GM12878 (cell line): ENCODE measurements at regions of chr10 and their contacts with region 1.

Region 1: GRCh38 chr10:54826994-54827560 is 26.0 kb upstream of the PCDH15 start:
- DNase-seq: no peak
- ATAC-seq: no peak
- H3K4me3 ChIP-seq: no peak overlapping the region
- H3K27ac ChIP-seq: no peak overlapping the region
- H3K4me1 ChIP-seq: no peaks in the 10 kb centered on the region
- H3K27me3 ChIP-seq: no peaks in the 10 kb centered on the region
- CTCF ChIP-seq: no peak
- EP300 ChIP-seq: no peak
- POLR2A ChIP-seq: no peak
- RAD21 ChIP-seq: no peak

Region 2: DNA sequence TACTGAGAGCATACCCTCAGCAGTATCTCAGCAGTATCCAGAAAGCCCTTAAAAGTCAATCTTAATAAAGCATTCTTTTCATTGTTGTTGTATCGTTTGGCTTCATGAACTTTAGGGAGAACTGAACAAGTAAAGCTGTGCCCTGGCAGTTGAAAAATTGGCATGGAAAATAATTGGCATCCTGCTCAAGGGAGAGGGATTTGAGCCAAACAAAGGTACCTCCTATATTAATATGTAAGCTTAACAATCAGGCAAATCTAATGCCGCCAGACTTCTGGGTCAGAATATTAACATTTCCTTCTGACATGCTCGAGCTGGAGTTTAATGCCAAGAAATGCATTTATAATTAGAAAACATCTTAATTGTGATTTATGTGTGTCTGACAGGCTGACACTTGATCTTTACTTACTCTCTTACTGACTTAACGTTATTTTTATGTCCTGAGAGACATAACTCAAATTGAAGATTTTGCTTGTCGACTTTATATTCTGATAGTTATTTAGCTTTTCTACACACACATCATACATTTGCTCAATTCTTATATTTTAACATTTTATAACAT is 16.1 kb after region 1 on chr10:
- CTCF ChIA-PET with region 1: no interaction called
- POLR2A ChIA-PET with region 1: no interaction called
- RAD21 ChIA-PET with region 1: no interaction called
- SMC1A ChIA-PET with region 1: no interaction called
- in situ Hi-C with region 1: no loop called
- intact Hi-C with region 1: no loop called
- DNase-seq: no peak
- ATAC-seq: no peak
- H3K4me3 ChIP-seq: no peak overlapping the region
- H3K27ac ChIP-seq: no peak overlapping the region
- H3K4me1 ChIP-seq: no peaks in the 10 kb centered on the region
- H3K27me3 ChIP-seq: no peaks in the 10 kb centered on the region
- CTCF ChIP-seq: no peak
- EP300 ChIP-seq: no peak
- POLR2A ChIP-seq: no peak
- RAD21 ChIP-seq: no peak

Region 3: DNA sequence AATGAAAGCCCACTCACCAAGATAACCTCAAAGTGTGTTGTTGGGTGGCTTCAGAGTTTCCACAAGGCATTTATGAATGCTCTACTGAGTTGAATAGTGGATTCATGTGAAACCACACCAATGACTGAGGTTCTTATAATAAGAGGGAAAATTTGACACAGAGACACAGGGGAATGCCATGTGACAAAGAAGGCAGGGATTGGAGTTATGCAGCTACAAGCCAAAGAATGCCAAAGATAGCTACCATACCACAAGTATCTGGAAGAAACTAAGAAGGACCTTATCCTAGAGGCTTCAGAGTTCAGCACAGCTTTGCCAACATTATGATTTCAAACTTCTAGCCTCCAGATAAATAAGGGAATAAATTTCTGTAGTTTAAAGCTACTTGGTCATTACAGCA is 41.9 kb after region 1 on chr10:
- CTCF ChIA-PET with region 1: no interaction called
- POLR2A ChIA-PET with region 1: no interaction called
- RAD21 ChIA-PET with region 1: no interaction called
- SMC1A ChIA-PET with region 1: no interaction called
- in situ Hi-C with region 1: no loop called
- intact Hi-C with region 1: no loop called
- DNase-seq: no peak
- ATAC-seq: no peak
- H3K4me3 ChIP-seq: no peak overlapping the region
- H3K27ac ChIP-seq: no peak overlapping the region
- H3K4me1 ChIP-seq: no peaks in the 10 kb centered on the region
- H3K27me3 ChIP-seq: no peaks in the 10 kb centered on the region
- CTCF ChIP-seq: no peak
- EP300 ChIP-seq: no peak
- POLR2A ChIP-seq: no peak
- RAD21 ChIP-seq: no peak

Region 4: DNA sequence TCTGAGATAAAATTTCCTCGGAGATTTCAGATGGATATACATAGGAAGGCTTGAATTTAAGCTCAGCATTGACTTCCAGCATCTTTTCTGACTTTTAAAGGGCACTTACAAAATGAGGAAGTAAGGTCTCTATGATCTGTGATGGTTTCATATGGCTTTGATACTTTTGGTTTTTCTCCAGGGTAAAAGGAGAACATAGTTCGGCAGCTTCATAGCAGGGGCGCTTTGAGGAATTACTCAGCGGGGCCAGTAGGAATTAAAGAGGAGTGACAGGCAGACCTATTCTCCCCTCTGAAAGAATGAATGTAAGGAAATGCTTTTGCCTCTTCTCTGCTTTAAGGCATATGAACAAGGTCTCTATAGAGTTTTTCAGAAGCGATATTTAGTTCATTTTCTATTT is 53.9 kb after region 1 on chr10:
- CTCF ChIA-PET with region 1: no interaction called
- POLR2A ChIA-PET with region 1: no interaction called
- RAD21 ChIA-PET with region 1: no interaction called
- SMC1A ChIA-PET with region 1: no interaction called
- in situ Hi-C with region 1: no loop called
- intact Hi-C with region 1: loop called (anchors 5 kb)
- DNase-seq: no peak
- ATAC-seq: no peak; the same call in 2 of the 3 replicates
- H3K4me3 ChIP-seq: no peak overlapping the region
- H3K27ac ChIP-seq: no peak overlapping the region
- H3K4me1 ChIP-seq: no peaks in the 10 kb centered on the region
- H3K27me3 ChIP-seq: no peaks in the 10 kb centered on the region
- CTCF ChIP-seq: no peak
- EP300 ChIP-seq: no peak
- POLR2A ChIP-seq: no peak
- RAD21 ChIP-seq: no peak